Heart left ventricle (tissue), 16 donors: ENCODE measurements at regions of chr2 and their contacts with region 1.

Region 1: GRCh38 chr2:127072970-127073369 is 34.0 kb downstream of the BIN1 start:
- DNase-seq: no peak
- ATAC-seq: no peak
- H3K4me3 ChIP-seq: no peak overlapping the region
- H3K27ac ChIP-seq: no peak overlapping the region
- H3K4me1 ChIP-seq: peaks cover 0 to 19% (median 0%) of the 10 kb centered on the region in 12 donors
- H3K27me3 ChIP-seq: no peaks in the 10 kb centered on the region
- CTCF ChIP-seq: no peak
- POLR2A ChIP-seq: no peak

Region 2: DNA sequence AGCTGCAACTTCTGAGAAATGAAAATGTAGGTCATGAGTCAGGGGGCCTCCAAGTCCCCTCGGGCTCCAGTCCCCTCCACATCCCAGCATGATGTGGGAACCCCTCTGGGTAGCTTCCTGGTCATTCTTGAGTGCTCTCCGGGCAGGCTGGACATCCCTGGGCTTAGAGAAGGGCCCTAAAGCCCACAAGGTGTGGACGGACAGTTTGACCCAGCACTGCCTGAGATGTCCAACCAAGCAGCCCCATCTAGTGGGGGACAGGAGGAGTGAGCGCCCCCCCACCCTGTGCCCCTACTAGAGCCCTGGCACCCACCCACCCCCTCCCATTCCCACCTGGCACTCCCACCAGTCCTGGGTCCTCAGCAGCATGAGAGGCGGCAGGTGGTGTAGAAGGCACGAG is 101.2 kb after region 1 on chr2:
- intact Hi-C with region 1: loop called in 3 of 10 experiments (anchors 5 to 10 kb)
- DNase-seq: no peak
- ATAC-seq: peak in 3 of 4 donors; percentile 29 to 57 (median 29)
- H3K4me3 ChIP-seq: no peak overlapping the region
- H3K27ac ChIP-seq: peak overlapping the region in 1 of 12 donors; percentile 88
- H3K4me1 ChIP-seq: peaks cover 0 to 41% (median 11%) of the 10 kb centered on the region in 12 donors
- H3K27me3 ChIP-seq: no peaks in the 10 kb centered on the region
- CTCF ChIP-seq: peak in 7 of 12 donors; percentile 12 to 47 (median 20)
- POLR2A ChIP-seq: no peak

Region 3: DNA sequence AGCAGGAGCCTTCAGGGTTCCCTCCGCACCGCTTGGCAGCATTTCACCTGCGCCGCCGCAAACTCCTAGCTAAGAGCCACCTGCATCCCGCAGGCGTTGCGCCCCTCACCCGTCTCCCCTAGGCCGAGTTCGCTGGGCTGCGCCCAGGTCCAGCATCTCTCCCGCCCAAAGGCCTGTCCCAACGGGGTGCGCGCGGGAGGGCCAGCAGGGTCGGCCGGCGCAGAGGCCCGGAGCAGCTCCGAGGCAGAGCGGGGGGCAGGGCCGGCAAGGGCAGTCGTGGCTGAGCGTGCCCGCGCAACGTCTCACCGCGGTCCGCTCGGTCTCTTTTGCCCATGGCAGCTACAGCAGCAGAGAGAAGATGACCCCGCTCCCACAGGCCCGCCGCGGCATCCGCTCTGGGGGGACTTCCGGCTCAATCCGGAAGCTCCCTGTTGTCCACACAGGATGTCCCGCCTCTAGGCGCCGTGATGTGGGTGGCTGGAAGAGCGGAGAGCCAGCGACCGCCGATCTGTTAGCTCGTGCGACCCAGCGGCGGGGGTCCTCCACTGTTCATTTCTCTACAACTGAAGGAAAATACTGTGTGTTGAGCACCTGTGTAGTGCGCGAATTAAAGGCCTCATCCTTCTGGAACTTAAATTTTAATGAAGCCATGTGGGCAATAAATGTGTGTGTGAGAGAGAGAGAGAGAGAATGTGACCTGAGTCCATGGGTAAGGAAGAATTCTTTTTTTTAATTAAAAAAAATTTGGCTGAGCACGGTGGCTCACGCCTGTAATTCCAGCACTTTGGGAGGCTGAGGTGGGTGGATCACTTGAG is 221.0 kb after region 1 on chr2 and contains the start of gene ERCC3:
- intact Hi-C with region 1: loop called in 2 of 10 experiments (anchors 10 kb)
- DNase-seq: peak; percentile 84 to 94 (median 91)
- ATAC-seq: peak; percentile 89 to 98 (median 97)
- H3K4me3 ChIP-seq: peak within 1 kb of the TSS; percentile 75 to 99 (median 88)
- H3K27ac ChIP-seq: peak within 1 kb of the TSS in 11 of 12 donors; percentile 29 to 88 (median 78)
- H3K4me1 ChIP-seq: peaks cover 0 to 25% (median 12%) of the 10 kb centered on the region in 12 donors
- H3K27me3 ChIP-seq: no peaks in the 10 kb centered on the region
- CTCF ChIP-seq: no peak
- POLR2A ChIP-seq: peak in 1 of 2 donors; percentile 62
- total RNA-seq, gene ERCC3: 18.1 to 27.9 (median 23.1) TPM

Region 4: DNA sequence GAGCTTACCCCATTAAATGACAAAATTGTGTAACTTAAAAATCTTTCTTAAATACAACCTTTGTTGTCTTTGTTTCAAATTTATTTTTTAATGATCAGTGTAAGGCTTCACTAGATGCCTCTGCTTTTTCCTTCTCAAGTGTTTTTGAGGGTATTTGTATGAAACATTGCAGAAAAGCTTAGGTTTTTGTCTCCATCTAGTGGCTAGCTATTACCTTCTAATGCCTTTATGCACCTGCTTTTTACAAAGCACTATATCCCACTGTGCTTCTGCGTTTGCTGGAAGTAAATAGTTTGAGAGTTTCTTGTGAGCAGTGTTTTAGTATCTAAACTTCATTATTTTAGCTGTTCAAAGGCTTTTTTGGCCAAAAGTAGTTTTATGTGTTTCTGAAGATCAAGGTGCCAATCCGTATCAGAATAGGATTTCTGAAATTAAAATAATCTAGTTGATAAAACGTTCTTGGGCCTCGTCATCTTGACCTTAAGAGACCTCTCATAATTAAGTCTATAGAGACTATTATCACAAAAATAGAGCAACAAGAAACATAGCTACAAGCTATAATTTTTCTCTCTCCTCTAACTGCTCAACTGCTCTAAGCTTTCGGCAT is 406.4 kb after region 1 on chr2:
- intact Hi-C with region 1: loop called in 1 of 10 experiments (anchors 5 kb)
- DNase-seq: no peak
- ATAC-seq: peak in 3 of 4 donors; percentile 34 to 74 (median 55)
- H3K4me3 ChIP-seq: no peak overlapping the region
- H3K27ac ChIP-seq: no peak overlapping the region
- H3K4me1 ChIP-seq: no peaks in the 10 kb centered on the region
- H3K27me3 ChIP-seq: no peaks in the 10 kb centered on the region
- CTCF ChIP-seq: peak; percentile 35 to 73 (median 62)
- POLR2A ChIP-seq: no peak